Dendritic cell treated with granulocyte-macrophage colony-stimulating factor and Interleukin-4, amounts not matched to agents 40 ng/mL and 50 ng/mL, for 4 days (primary cell): ENCODE measurements at regions of chr11 and their contacts with region 1.

Region 1: GRCh38 chr11:64448599-64449556 is 89.9 kb downstream of the RPS6KA4 start:
- H3K4me3 Mint-ChIP-seq: peak overlapping the region; percentile 77
- H3K27ac Mint-ChIP-seq: peak overlapping the region; percentile 93
- H3K4me1 Mint-ChIP-seq: peaks cover 60% of the 10 kb centered on the region
- H3K27me3 Mint-ChIP-seq: no peaks in the 10 kb centered on the region

Region 2: GRCh38 chr11:64358907-64359711 is 89.8 kb before region 1 on chr11 and contains the start of gene RPS6KA4:
- intact Hi-C with region 1: loop called (anchors 5 kb)
- H3K4me3 Mint-ChIP-seq: peak within 1 kb of the TSS; percentile 93
- H3K27ac Mint-ChIP-seq: peak within 1 kb of the TSS; percentile 80
- H3K4me1 Mint-ChIP-seq: peaks cover 61% of the 10 kb centered on the region
- H3K27me3 Mint-ChIP-seq: no peaks in the 10 kb centered on the region

Region 3: DNA sequence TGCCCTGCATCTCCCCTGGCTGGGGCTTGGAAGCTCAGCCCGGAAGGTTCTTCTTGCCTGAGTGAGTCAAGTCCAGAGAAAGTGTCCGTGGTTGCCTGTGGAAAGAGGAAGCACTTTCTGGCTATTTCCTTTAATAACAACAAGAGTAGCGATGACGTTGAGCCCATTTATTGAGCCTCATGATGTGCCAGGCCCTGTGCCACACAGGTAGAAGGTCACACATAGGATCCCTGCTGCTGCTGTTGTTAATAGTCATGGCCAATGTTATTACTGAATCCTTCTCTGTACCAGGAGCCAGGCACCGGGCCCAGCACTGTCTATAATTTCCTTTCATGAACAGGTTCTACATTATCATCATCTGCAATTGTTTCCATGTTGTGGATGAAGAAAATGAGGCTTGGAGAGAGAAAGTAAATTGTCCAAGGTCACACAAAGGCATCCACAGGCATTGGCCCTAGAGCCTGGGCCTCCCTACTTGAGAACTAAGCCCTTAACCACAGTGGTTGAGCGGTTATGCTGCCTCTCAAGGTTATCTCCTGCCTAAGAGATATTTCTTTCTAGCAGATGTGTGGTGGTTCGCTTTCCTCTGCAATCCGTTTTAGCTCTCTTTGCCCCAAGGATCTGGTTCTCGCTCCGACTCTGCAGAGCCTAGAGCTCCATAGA is 63.1 kb before region 1 on chr11:
- intact Hi-C with region 1: loop called (anchors 1 kb)
- H3K4me3 Mint-ChIP-seq: peak overlapping the region; percentile 58
- H3K27ac Mint-ChIP-seq: peak overlapping the region; percentile 64
- H3K4me1 Mint-ChIP-seq: peaks cover 52% of the 10 kb centered on the region
- H3K27me3 Mint-ChIP-seq: peaks cover 21% of the 10 kb centered on the region

Region 4: DNA sequence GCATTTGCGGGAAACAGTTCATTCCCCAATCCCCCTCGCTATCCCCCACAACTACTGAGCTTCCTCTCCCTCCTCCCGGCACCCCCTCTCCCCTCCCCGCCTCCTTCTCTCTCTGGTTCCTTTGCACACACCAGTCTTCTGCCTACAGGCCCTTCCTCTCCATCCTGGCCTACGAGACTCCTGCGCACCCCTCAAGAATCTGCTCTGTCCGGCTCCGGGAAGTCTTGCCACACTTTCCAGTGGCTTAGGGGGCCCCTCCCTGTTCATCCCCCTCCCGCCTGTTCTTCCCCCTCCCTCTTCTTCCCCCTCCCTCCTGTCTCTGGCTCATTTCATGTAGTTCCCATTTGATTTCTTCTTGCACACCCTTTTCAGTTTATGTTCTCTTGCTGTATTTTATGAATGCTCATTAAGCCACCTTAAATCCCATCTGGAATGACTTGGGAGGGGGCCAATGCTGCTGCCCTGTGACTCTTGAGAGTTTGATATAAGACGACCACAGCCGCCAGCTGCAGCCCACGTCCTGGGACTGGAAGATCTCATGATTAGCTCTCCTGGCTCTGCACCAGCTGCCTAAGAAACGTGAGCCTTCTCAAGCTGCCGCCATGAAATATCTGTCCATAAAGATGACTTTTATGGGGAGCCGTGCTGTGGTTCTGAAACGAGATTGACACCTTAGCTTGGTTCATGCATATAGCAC is 39.0 kb before region 1 on chr11:
- intact Hi-C with region 1: loop called (anchors 5 kb)
- H3K4me3 Mint-ChIP-seq: peak overlapping the region; percentile 44
- H3K27ac Mint-ChIP-seq: peak overlapping the region; percentile 20
- H3K4me1 Mint-ChIP-seq: peaks cover 35% of the 10 kb centered on the region
- H3K27me3 Mint-ChIP-seq: peaks cover 1% of the 10 kb centered on the region